ENCODE measurements at regions of chr19 and their contacts with region 1.

Region 1: DNA sequence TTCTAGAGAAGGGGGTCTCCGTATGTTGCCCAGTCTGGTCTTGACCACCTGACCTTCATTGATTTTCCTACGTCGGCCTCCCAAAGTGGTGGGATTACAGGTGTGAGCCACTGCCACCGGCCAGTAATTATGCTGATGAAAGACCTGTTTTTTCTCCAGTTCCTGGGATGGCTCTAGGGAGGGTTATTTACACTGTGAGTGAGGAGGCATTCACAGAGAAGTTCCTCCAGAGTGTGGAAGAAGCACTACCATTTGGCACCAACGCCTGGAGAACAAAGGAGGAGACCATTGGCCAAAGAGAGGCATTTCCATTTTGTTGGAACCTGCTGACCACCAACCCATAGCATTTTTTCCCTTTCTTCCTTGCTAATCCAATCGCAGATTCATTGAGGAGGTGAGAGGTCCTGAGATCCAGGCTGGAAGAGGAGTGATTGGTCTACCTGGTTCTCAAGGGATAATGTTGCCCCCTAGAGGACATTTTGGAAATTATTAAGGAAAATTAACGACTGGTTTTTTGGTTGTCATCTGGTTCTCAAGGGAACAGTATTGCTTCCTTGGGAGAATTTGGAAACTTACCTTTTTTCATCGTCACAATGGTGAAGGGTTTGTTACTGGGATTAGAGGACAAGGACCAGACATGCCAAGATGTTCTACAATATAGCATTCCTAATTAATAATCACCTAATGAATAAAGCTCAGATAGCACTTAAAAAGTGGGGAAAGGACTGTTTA is 5.5 kb upstream of the SAE1 start:
- DNase-seq: no peak
- H3K4me3 ChIP-seq: no peak overlapping the region
- H3K27ac ChIP-seq: no peak overlapping the region
- H3K4me1 ChIP-seq: no peaks in the 10 kb centered on the region
- H3K27me3 ChIP-seq: no peaks in the 10 kb centered on the region
- CTCF ChIP-seq: peak; percentile 39 to 84 (median 67)
- EP300 ChIP-seq: no peak
- POLR2A ChIP-seq: no peak

Region 2: GRCh38 chr19:47035127-47036096 is 89.7 kb before region 1 on chr19:
- intact Hi-C with region 1: loop called in 2 of 4 experiments (anchors 2 to 10 kb)
- DNase-seq: peak; percentile 77 to 94 (median 87)
- H3K4me3 ChIP-seq: peak overlapping the region; percentile 29
- H3K27ac ChIP-seq: no peak overlapping the region
- H3K4me1 ChIP-seq: peaks cover 2% of the 10 kb centered on the region
- H3K27me3 ChIP-seq: no peaks in the 10 kb centered on the region
- CTCF ChIP-seq: peak; percentile 74 to 94 (median 88)
- EP300 ChIP-seq: no peak
- POLR2A ChIP-seq: no peak

Region 3: GRCh38 chr19:47075179-47075810 is 49.8 kb before region 1 on chr19:
- intact Hi-C with region 1: loop called in 3 of 4 experiments (anchors 2 to 5 kb)
- DNase-seq: no peak
- H3K4me3 ChIP-seq: no peak overlapping the region
- H3K27ac ChIP-seq: no peak overlapping the region
- H3K4me1 ChIP-seq: no peaks in the 10 kb centered on the region
- H3K27me3 ChIP-seq: no peaks in the 10 kb centered on the region
- CTCF ChIP-seq: no peak
- EP300 ChIP-seq: no peak
- POLR2A ChIP-seq: no peak

Region 4: DNA sequence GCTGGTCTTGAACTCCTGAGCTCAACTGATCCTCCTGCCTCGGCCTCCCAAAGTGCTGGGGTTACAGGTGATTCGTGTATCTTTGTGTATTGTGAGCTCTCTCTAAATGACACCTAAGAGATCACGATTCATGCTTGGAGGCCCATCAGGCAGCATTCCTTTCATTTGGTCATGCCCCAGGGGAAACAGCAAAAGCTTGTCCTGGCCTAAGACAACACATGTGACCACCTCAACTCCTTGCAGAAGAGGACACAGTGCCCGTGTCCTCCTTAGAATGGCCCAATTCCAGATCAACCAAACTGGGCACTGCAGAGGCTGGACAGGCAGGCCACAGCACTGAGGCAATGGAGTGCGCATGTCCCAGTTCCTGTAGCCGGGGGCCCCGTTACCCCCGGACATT is 44.0 kb before region 1 on chr19:
- intact Hi-C with region 1: loop called in 3 of 4 experiments (anchors 2 to 5 kb)
- DNase-seq: no peak
- H3K4me3 ChIP-seq: no peak overlapping the region
- H3K27ac ChIP-seq: no peak overlapping the region
- H3K4me1 ChIP-seq: no peaks in the 10 kb centered on the region
- H3K27me3 ChIP-seq: no peaks in the 10 kb centered on the region
- CTCF ChIP-seq: no peak
- EP300 ChIP-seq: no peak
- POLR2A ChIP-seq: no peak

Region 5: DNA sequence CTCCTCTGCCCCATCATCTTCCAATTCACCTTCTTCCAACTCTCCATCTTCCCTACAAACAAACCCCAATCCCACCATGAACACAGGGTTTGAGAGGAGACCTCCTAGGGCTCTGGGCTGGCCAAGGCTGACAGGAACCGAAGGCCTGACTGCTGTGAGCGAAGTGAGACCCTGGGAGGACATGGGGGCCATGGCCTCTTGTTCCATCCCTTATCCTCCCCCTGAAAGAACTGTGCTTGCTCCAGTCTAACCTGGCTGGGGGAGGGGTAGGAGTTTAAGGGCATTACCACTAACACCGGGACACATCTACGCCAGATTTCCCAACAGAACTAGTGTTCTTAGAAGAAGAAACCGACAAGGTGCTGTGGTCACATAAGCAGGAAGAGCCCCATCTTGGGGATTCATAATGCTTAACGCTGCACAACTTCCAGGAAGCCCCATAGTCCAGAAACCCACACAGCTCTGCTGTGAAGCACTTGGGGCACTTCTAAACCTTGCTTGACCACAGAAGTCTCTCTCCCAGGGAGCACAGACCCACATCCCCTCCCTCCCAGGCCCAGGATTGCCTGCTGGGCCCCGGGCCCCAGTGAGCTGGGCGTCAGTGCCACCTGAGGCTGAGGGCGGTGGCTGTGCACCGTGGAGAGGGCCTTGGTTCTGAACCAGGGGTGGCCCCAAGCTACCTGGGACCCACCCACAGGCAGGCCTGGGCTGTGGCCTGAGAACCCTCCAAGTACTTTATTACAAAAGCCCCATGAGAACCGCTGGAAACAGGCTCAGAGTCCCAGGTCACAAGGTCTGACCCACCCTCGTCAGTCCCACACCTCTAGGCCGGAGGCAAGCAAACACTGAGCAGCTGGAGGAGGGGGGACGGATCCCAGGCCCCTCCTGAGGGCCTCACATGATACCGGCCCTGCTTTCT is 30.3 kb before region 1 on chr19:
- intact Hi-C with region 1: no loop called
- DNase-seq: peak in 2 of 5 donors; percentile 37 to 49
- H3K4me3 ChIP-seq: no peak overlapping the region
- H3K27ac ChIP-seq: peak overlapping the region; percentile 55 to 78
- H3K4me1 ChIP-seq: peaks cover 15% of the 10 kb centered on the region
- H3K27me3 ChIP-seq: no peaks in the 10 kb centered on the region
- CTCF ChIP-seq: no peak
- EP300 ChIP-seq: no peak
- POLR2A ChIP-seq: no peak

Measured in ovary (tissue), 10 donors.